Naive thymus-derived CD4-positive, alpha-beta T cell (primary cell): ENCODE measurements at regions of chr19 and their contacts with region 1.

Region 1: DNA sequence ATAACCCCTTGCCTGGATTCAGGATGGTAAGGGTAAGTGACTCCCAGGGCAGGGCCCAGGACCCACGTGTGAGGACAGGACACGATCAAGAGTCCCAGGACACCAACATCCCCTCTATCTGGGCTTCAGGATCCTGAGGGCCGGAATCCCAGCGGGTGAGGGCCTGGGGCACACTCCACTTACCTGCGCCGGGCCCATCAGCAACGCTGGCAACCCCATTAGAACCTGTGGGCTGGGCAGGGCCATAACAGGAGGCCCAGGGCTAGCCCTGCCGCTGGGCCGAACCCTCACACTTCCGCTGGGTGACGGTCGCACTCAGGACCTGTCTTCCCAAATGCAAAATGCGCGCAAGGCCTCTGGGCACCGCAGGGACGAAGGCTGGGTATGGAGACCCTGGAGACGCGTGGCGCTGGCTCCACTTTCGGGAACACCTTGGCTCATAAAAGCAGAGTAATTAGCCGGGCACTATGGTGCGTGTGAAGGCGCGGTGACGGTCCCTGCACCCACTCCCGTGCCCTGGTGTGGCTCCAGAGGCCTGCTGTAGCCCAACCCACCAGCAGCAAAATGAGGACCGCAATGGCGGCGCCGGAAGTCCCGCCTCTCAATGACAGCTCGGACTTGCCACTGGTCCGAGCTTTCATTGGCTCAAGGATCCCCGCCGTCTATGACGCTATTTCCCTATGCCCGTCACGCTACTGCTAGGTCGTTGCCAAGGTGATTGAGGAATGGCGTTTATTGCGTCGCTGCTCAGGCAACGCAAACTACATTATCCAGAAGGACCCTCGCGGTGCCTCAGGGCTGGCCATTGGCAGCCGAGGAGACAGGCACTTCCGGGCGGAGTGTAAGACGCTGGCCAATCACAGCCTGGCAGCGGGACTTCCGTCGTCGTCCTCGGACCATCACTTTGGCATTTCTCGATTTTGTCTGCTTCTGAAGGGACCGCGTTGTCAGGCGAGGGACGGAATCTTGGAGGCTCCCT is at the start of gene ZNF132:
- DNase-seq: peak; percentile 78 to 99 (median 95)
- ATAC-seq: peak; percentile 98
- H3K4me3 ChIP-seq: peak within 1 kb of the TSS; percentile 73
- H3K4me3 Mint-ChIP-seq: peak within 1 kb of the TSS; percentile 86 to 99 (median 96)
- H3K27ac ChIP-seq: peak within 1 kb of the TSS; percentile 81
- H3K27ac Mint-ChIP-seq: peak within 1 kb of the TSS; percentile 87 to 99 (median 97)
- H3K4me1 ChIP-seq: peaks cover 17% of the 10 kb centered on the region in 2 donors
- H3K4me1 Mint-ChIP-seq: peaks cover 21 to 35% (median 27%) of the 10 kb centered on the region in 7 donors
- H3K27me3 ChIP-seq: no peaks in the 10 kb centered on the region
- H3K27me3 Mint-ChIP-seq: no peaks in the 10 kb centered on the region
- total RNA-seq, gene ZNF132: 1.2 to 12.9 (median 4.9) TPM

Region 2: GRCh38 chr19:57819475-57820148 is 620.3 kb before region 1 on chr19:
- CTCF ChIA-PET with region 1: no interaction called
- POLR2A ChIA-PET with region 1: no interaction called
- intact Hi-C with region 1: loop called in 1 of 2 experiments (anchors 1 kb)
- DNase-seq: peak; percentile 45 to 85 (median 79)
- ATAC-seq: peak; percentile 89
- H3K4me3 ChIP-seq: peak overlapping the region; percentile 98
- H3K4me3 Mint-ChIP-seq: peak overlapping the region; percentile 95 to 99 (median 98)
- H3K27ac ChIP-seq: peak overlapping the region; percentile 92
- H3K27ac Mint-ChIP-seq: peak overlapping the region; percentile 88 to 99 (median 95)
- H3K4me1 ChIP-seq: peaks cover 0 to 13% of the 10 kb centered on the region in 2 donors
- H3K4me1 Mint-ChIP-seq: peaks cover 38 to 73% (median 67%) of the 10 kb centered on the region in 7 donors
- H3K27me3 ChIP-seq: no peaks in the 10 kb centered on the region
- H3K27me3 Mint-ChIP-seq: no peaks in the 10 kb centered on the region

Region 3: GRCh38 chr19:58362272-58362994 is 77.4 kb before region 1 on chr19 and contains the start of gene ZNF497:
- CTCF ChIA-PET with region 1: no interaction called
- POLR2A ChIA-PET with region 1: interaction called, 4 read pairs
- intact Hi-C with region 1: loop called (anchors 1 kb)
- DNase-seq: peak; percentile 91 to 96 (median 95)
- ATAC-seq: peak; percentile 92
- H3K4me3 ChIP-seq: peak within 1 kb of the TSS; percentile 99
- H3K4me3 Mint-ChIP-seq: peak within 1 kb of the TSS; percentile 89 to 99 (median 95)
- H3K27ac ChIP-seq: peak within 1 kb of the TSS; percentile 78
- H3K27ac Mint-ChIP-seq: peak within 1 kb of the TSS; percentile 71 to 96 (median 90)
- H3K4me1 ChIP-seq: peaks cover 5 to 7% of the 10 kb centered on the region in 2 donors
- H3K4me1 Mint-ChIP-seq: peaks cover 7 to 21% (median 11%) of the 10 kb centered on the region in 7 donors
- H3K27me3 ChIP-seq: no peaks in the 10 kb centered on the region
- H3K27me3 Mint-ChIP-seq: peaks cover 0 to 5% (median 0%) of the 10 kb centered on the region in 5 donors
- total RNA-seq, gene ZNF497: 1.0 to 2.7 (median 1.8) TPM

Region 4: DNA sequence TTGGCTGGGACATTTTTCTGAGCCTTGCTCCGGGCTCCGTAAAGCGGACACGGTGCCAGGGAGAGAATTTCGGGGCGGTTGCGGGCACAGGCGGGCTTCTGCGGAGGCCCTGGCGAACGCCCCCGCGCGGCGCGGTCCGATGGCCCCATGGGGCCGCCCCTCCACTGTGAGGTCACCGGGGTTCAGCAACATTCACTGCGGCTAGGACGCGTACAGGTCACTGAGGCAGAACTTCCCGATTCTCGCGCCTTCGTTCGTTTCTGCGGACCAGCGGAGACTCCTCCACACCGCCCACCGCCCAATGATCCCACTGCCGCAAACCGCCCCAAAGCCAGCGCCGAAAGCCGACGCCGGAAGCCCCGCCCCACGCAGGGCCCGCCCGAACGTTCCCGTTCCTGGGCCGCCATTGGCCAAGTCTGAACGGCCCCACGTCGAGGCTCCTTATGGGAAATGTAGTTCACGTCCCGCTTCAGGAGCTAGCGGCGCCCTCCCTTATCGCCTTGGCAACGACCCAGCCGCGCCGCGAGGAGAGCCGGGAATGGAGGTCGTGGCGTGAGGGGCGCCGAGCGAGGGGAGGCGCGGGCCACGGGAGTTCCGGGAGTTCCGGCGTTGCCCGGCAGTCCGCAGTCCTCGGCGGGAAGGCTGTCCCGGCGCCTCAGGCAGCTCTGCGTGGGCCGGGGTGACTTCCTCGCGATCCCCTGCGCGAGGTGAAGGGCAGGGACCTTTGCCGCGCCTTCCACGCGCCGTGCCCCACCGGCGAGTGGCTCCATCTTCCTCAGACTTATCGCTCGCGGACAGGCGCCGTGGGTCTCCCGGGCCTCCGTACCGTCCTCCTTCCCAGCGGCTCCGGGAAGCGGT is 31.5 kb before region 1 on chr19 and contains the start of gene ZNF584:
- CTCF ChIA-PET with region 1: no interaction called
- POLR2A ChIA-PET with region 1: interaction called, 4 read pairs
- intact Hi-C with region 1: loop called (anchors 1 kb)
- DNase-seq: peak; percentile 86 to 94 (median 92)
- ATAC-seq: peak; percentile 98
- H3K4me3 ChIP-seq: peak within 1 kb of the TSS; percentile 96
- H3K4me3 Mint-ChIP-seq: peak within 1 kb of the TSS; percentile 82 to 98 (median 95)
- H3K27ac ChIP-seq: peak within 1 kb of the TSS; percentile 87
- H3K27ac Mint-ChIP-seq: peak within 1 kb of the TSS; percentile 83 to 95 (median 93)
- H3K4me1 ChIP-seq: peaks cover 12 to 15% of the 10 kb centered on the region in 2 donors
- H3K4me1 Mint-ChIP-seq: peaks cover 5 to 45% (median 34%) of the 10 kb centered on the region in 7 donors
- H3K27me3 ChIP-seq: no peaks in the 10 kb centered on the region
- H3K27me3 Mint-ChIP-seq: no peaks in the 10 kb centered on the region
- total RNA-seq, gene ZNF584: 4.2 to 12.1 (median 8.8) TPM

Region 5: GRCh38 chr19:58429745-58430144 is 10.1 kb before region 1 on chr19:
- CTCF ChIA-PET with region 1: no interaction called
- POLR2A ChIA-PET with region 1: no interaction called
- intact Hi-C with region 1: no loop called
- DNase-seq: no peak
- ATAC-seq: no peak
- H3K4me3 ChIP-seq: no peak overlapping the region
- H3K4me3 Mint-ChIP-seq: no peak overlapping the region
- H3K27ac ChIP-seq: no peak overlapping the region
- H3K27ac Mint-ChIP-seq: no peak overlapping the region
- H3K4me1 ChIP-seq: no peaks in the 10 kb centered on the region
- H3K4me1 Mint-ChIP-seq: no peaks in the 10 kb centered on the region
- H3K27me3 ChIP-seq: no peaks in the 10 kb centered on the region
- H3K27me3 Mint-ChIP-seq: no peaks in the 10 kb centered on the region

Region 6: DNA sequence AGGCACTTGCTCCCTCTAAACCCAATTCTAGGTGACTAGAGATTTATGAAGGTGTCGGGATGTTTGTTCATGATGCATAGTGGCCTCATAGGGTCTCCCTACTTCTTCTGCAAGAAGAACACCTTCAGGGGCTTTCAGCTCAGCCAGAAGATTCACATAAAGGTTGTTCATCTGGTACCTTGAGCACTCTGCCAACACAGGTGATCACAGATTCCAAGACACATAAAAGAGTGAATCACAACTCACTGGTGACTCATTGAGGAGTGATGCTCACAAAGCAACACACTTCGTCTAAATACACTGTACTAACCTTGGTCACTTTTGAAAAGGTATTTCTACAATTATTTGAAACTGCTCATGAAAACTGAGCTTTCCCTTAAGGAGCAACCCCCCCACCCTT is 20.2 kb after region 1 on chr19:
- CTCF ChIA-PET with region 1: no interaction called
- POLR2A ChIA-PET with region 1: no interaction called
- intact Hi-C with region 1: no loop called
- DNase-seq: no peak
- ATAC-seq: no peak
- H3K4me3 ChIP-seq: no peak overlapping the region
- H3K4me3 Mint-ChIP-seq: no peak overlapping the region
- H3K27ac ChIP-seq: no peak overlapping the region
- H3K27ac Mint-ChIP-seq: no peak overlapping the region
- H3K4me1 ChIP-seq: no peaks in the 10 kb centered on the region
- H3K4me1 Mint-ChIP-seq: peaks cover 0 to 2% (median 0%) of the 10 kb centered on the region in 7 donors
- H3K27me3 ChIP-seq: no peaks in the 10 kb centered on the region
- H3K27me3 Mint-ChIP-seq: no peaks in the 10 kb centered on the region

Region 7: GRCh38 chr19:58475714-58476497 is 36.0 kb after region 1 on chr19 and contains the start of gene ZNF446:
- CTCF ChIA-PET with region 1: no interaction called
- POLR2A ChIA-PET with region 1: interaction called, 4 read pairs
- intact Hi-C with region 1: loop called (anchors 1 kb)
- DNase-seq: peak; percentile 84 to 97 (median 96)
- ATAC-seq: peak; percentile 92
- H3K4me3 ChIP-seq: peak within 1 kb of the TSS; percentile 77
- H3K4me3 Mint-ChIP-seq: peak within 1 kb of the TSS; percentile 78 to 99 (median 96)
- H3K27ac ChIP-seq: peak within 1 kb of the TSS; percentile 91
- H3K27ac Mint-ChIP-seq: peak within 1 kb of the TSS; percentile 87 to 100 (median 99)
- H3K4me1 ChIP-seq: peaks cover 14 to 16% of the 10 kb centered on the region in 2 donors
- H3K4me1 Mint-ChIP-seq: peaks cover 6 to 29% (median 17%) of the 10 kb centered on the region in 7 donors
- H3K27me3 ChIP-seq: no peaks in the 10 kb centered on the region
- H3K27me3 Mint-ChIP-seq: no peaks in the 10 kb centered on the region
- total RNA-seq, gene ZNF446: 9.5 to 20.0 (median 15.1) TPM

Region 8: GRCh38 chr19:58572818-58573657 is 133.2 kb after region 1 on chr19 and contains the start of gene MZF1:
- CTCF ChIA-PET with region 1: no interaction called
- POLR2A ChIA-PET with region 1: no interaction called
- intact Hi-C with region 1: loop called (anchors 1 kb)
- DNase-seq: peak; percentile 97 to 100 (median 100)
- ATAC-seq: peak; percentile 81
- H3K4me3 ChIP-seq: peak within 1 kb of the TSS; percentile 71
- H3K4me3 Mint-ChIP-seq: peak within 1 kb of the TSS; percentile 82 to 100 (median 98)
- H3K27ac ChIP-seq: peak within 1 kb of the TSS; percentile 97
- H3K27ac Mint-ChIP-seq: peak within 1 kb of the TSS; percentile 97 to 100 (median 100)
- H3K4me1 ChIP-seq: peaks cover 19 to 20% of the 10 kb centered on the region in 2 donors
- H3K4me1 Mint-ChIP-seq: peaks cover 27 to 50% (median 33%) of the 10 kb centered on the region in 7 donors
- H3K27me3 ChIP-seq: no peaks in the 10 kb centered on the region
- H3K27me3 Mint-ChIP-seq: peaks cover 0 to 4% (median 0%) of the 10 kb centered on the region in 5 donors
- total RNA-seq, gene MZF1: 35.0 to 51.8 (median 44.9) TPM